Activated naive CD4-positive, alpha-beta T cell treated with anti-CD3 and anti-CD28 coated beads for 36 hours (primary cell): ENCODE measurements at regions of chr5 and their contacts with region 1.

Region 1: DNA sequence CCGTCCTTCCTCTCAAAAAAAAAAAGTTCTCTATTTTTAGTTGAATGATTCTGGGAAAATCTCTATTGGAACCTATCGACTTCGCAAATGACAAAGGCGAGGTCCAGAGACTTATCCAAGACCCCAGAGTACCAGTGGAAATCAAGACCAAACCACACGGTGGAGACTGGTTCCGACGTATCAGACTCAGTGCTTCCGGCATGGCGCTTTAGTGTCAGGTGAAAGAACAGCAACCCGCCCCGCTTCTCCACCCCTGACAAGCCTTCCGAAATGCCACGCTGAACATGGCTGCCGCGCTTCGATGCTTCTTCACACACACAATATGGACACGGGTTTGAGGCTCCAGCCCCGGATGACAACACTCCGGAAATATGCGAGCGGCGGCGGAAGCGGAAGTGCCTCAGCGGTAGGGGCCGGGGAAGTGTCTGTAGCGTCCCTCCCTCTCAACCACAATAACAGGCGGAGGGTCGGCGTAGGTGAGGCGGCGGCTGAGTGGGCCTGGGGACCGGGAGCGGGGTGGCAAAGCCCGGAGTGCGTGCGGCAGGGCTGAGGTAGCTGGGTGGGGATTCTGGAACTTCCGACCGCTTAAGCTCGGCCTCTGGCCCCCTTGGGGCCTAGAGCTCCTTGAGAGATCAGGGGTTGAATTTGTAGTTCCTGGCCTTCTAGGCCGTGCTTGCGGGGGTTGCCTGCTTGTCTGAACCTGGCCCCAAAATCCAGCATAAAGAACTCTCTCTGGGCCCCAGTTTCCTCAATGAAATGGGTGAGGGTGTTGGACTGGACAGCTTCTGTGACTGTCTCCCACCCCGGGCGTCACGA is at the start of gene FBXO38:
- DNase-seq: peak; percentile 99
- H3K4me3 Mint-ChIP-seq: peak within 1 kb of the TSS; percentile 89
- H3K27ac Mint-ChIP-seq: peak within 1 kb of the TSS; percentile 94
- H3K4me1 Mint-ChIP-seq: peaks cover 63% of the 10 kb centered on the region
- H3K27me3 Mint-ChIP-seq: no peaks in the 10 kb centered on the region
- total RNA-seq, gene FBXO38: 31.7 to 34.2 TPM

Region 2: DNA sequence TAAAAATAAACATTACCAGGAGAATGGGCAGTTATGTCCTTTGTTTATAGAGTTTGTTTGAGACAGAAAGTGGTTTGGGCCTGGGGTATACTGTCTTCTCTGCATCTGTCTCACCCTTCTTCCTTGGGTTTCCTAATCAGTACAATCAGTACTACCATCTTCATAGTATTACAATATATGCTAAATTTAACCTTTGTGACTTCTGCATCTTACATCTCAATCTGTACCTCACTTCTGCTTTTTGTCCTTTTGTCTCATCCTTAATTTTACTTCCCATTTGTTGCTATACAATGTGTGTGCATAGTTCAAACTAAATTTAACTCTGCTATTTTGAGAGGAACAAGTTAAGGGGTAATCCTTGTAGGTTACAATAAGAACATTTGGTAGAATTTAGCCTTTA is 19.6 kb after region 1 on chr5:
- CTCF ChIA-PET with region 1: interaction called, 5 read pairs
- intact Hi-C with region 1: loop called (anchors 1 kb)
- DNase-seq: no peak
- H3K4me3 Mint-ChIP-seq: no peak overlapping the region
- H3K27ac Mint-ChIP-seq: no peak overlapping the region
- H3K4me1 Mint-ChIP-seq: peaks cover 39% of the 10 kb centered on the region
- H3K27me3 Mint-ChIP-seq: no peaks in the 10 kb centered on the region

Region 3: GRCh38 chr5:148708854-148709253 is 325.1 kb after region 1 on chr5:
- CTCF ChIA-PET with region 1: no interaction called
- intact Hi-C with region 1: loop called (anchors 1 kb)
- DNase-seq: peak; percentile 33
- H3K4me3 Mint-ChIP-seq: no peak overlapping the region
- H3K27ac Mint-ChIP-seq: no peak overlapping the region
- H3K4me1 Mint-ChIP-seq: peaks cover 13% of the 10 kb centered on the region
- H3K27me3 Mint-ChIP-seq: peaks cover 19% of the 10 kb centered on the region

Region 4: DNA sequence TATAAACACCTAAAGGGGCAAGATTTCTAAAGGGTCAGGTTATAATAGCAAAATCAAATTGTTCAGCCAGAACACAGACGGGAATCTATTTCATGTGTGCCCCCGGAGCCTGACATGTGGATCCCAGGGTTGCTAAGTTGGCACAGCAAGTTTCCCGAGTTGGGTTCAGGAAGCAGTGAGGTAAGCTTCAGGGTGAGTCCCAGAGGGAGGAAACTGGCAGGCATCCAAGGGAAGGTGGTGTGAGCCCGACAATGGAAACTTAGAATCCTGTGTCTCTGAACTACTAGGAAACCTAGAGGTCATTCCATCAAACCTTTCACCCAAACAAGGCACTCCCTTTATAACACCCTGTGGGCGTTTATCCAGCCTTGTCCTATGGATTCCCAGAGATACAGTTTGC is 541.0 kb after region 1 on chr5:
- CTCF ChIA-PET with region 1: no interaction called
- intact Hi-C with region 1: no loop called
- DNase-seq: no peak
- H3K4me3 Mint-ChIP-seq: no peak overlapping the region
- H3K27ac Mint-ChIP-seq: no peak overlapping the region
- H3K4me1 Mint-ChIP-seq: peaks cover 8% of the 10 kb centered on the region
- H3K27me3 Mint-ChIP-seq: peaks cover 16% of the 10 kb centered on the region

Region 5: GRCh38 chr5:149035372-149035790 is 651.6 kb after region 1 on chr5:
- CTCF ChIA-PET with region 1: no interaction called
- intact Hi-C with region 1: loop called (anchors 5 kb)
- DNase-seq: peak; percentile 89
- H3K4me3 Mint-ChIP-seq: no peak overlapping the region
- H3K27ac Mint-ChIP-seq: no peak overlapping the region
- H3K4me1 Mint-ChIP-seq: peaks cover 24% of the 10 kb centered on the region
- H3K27me3 Mint-ChIP-seq: no peaks in the 10 kb centered on the region

Region 6: DNA sequence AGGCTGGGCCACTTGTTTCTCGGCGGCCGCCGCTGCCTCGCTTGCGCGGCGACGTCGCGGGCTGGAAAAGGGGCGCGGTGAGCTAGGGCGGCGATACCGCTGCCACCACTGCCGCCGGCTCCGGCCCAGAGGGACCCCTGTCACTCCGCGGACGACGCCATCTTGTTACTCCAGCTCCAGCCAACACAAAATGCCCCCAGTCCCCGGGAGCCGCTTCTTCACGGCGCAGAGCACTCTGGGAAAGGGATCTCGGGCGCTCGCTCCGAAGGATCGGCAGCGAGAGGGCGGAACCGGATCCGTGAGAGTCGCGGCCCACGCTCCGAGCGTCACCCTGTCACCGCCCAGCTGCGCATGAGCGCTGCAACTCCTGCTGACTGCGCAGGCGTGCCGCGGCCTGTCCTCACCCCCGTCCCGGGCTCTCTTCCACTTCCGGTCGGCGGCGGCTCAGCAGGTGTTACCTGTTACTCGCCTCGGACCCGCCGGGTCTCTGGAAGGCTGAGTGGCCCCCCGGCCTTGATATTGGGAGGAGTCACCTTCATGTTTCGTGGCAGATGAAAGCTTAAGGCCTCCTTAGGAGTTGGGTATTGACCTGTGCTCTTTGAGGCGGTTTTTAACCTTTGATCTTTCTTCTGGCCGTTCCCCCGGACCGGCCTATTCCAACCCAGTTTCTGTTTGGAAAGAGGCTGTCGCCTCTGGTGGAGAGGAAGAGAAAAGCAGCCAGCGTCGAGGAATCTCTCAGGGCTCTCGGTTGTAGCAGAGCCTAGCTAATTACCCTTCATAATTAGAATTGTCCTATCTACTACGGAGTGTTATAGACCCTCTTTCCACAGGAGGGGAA is 1167.6 kb after region 1 on chr5 and contains the start of gene CSNK1A1:
- CTCF ChIA-PET with region 1: no interaction called
- intact Hi-C with region 1: loop called (anchors 2 kb)
- DNase-seq: peak; percentile 99
- H3K4me3 Mint-ChIP-seq: peak within 1 kb of the TSS; percentile 97
- H3K27ac Mint-ChIP-seq: peak within 1 kb of the TSS; percentile 99
- H3K4me1 Mint-ChIP-seq: peaks cover 32% of the 10 kb centered on the region
- H3K27me3 Mint-ChIP-seq: no peaks in the 10 kb centered on the region
- total RNA-seq, gene CSNK1A1: 183 to 188 TPM